AG04450 (cell line): ENCODE measurements at regions of chr3 and their contacts with region 1.

Region 1: GRCh38 chr3:146189519-146190173 is 28.7 kb upstream of the PLOD2 start:
- DNase-seq: peak; percentile 10
- H3K4me3 ChIP-seq: no peak overlapping the region
- H3K27ac ChIP-seq: no peak overlapping the region
- H3K27me3 ChIP-seq: no peaks in the 10 kb centered on the region
- CTCF ChIP-seq: peak; percentile 80

Region 2: GRCh38 chr3:146065573-146066006 is 124.1 kb before region 1 on chr3:
- CTCF ChIA-PET with region 1: interaction called, 270 read pairs
- POLR2A ChIA-PET with region 1: no interaction called
- DNase-seq: peak; percentile 48
- H3K4me3 ChIP-seq: no peak overlapping the region
- H3K27ac ChIP-seq: no peak overlapping the region
- H3K27me3 ChIP-seq: no peaks in the 10 kb centered on the region
- CTCF ChIP-seq: peak; percentile 72

Region 3: DNA sequence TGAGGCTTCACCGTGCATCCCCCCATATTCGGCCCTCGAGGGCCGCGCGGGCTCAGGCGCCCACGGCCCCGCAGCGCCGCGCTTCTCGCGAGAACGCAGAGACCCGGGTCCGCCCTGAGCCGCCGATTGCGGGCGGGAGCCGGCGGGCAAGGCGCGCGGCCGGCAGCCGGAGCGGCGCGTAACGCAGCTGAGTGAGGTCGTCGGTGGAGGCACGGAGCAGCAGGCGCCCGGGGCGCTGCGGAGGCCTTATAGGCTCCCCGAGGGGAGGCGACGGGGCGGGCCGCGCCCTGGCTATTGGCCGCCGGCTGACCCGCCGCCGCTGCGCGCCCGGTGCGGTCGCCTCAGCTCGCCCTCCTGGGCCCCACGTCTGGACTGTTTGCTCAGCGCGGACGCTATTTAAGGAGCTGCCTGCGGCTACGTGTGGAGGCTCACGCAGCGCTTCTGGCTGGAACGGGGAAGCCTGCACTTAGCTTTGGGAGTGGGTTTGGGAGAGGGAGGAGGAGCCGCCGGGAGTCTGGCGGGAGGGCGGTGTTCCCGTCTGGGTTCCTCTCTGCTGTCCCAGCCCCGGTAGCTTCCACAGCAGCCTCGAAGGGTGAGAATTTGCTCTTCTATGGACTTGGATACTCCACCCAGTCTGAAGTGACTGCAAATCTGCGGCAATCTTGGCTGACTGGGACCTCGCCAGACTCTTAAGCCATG is 28.5 kb before region 1 on chr3 and contains the start of gene PLOD2:
- CTCF ChIA-PET with region 1: interaction called, 34 read pairs
- POLR2A ChIA-PET with region 1: no interaction called
- DNase-seq: no peak
- H3K4me3 ChIP-seq: peak within 1 kb of the TSS; percentile 75
- H3K27ac ChIP-seq: peak within 1 kb of the TSS; percentile 90
- H3K27me3 ChIP-seq: no peaks in the 10 kb centered on the region
- CTCF ChIP-seq: no peak
- polyA plus RNA-seq, gene PLOD2: 63.7 and 88.9 TPM in 2 replicates

Region 4: GRCh38 chr3:146200461-146201220 is 11.0 kb after region 1 on chr3:
- CTCF ChIA-PET with region 1: interaction called, 29 read pairs
- POLR2A ChIA-PET with region 1: no interaction called
- DNase-seq: no peak
- H3K4me3 ChIP-seq: no peak overlapping the region
- H3K27ac ChIP-seq: no peak overlapping the region
- H3K27me3 ChIP-seq: no peaks in the 10 kb centered on the region
- CTCF ChIP-seq: no peak

Region 5: DNA sequence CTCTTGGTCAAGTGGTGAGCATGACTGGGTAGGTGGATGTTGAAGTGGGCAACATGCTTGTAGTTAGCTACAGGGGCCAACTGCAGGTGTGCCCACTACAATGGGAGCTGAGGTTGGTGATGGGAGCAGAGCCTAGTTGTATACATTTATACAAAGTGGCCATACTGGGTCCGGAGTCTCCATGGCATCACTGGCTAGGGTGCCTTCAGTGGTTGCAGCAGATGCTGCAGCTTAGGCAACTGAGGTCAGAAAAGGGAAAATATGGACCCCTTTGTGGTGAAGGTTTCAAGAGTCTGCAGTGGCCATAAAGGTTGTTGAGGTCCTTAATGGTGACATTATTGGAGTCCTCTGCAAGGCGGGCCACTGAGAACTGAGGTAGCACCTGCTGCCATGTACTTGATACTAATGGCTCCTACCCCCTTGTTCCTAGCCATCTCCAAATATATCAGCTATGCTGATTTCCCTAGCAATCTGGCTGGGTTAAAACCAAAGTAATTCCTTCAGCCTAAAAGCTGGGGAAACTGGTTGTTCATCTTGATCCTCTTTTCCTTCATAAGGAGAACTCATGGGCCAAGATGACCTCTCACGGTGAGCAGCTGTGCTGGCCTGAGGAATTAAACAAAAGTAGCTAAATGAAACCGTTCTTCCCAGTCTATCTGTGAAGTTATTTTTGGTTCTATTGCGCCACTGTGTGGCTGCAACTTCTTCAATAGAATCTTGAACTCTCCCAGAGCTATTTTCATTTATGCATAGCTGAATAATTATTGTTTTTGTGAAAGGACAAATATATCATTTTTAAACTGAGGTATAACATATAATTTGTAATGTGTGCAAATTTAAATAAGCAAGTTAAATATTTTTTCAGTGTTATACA is 137.3 kb after region 1 on chr3:
- CTCF ChIA-PET with region 1: interaction called, 215 read pairs
- POLR2A ChIA-PET with region 1: interaction called, 9 read pairs
- DNase-seq: peak; percentile 57
- H3K4me3 ChIP-seq: no peak overlapping the region
- H3K27ac ChIP-seq: no peak overlapping the region
- H3K27me3 ChIP-seq: no peaks in the 10 kb centered on the region
- CTCF ChIP-seq: peak; percentile 63

Region 6: GRCh38 chr3:146577662-146578061 is 388.0 kb after region 1 on chr3:
- CTCF ChIA-PET with region 1: interaction called, 75 read pairs
- POLR2A ChIA-PET with region 1: no interaction called
- DNase-seq: peak; percentile 43
- H3K4me3 ChIP-seq: no peak overlapping the region
- H3K27ac ChIP-seq: no peak overlapping the region
- H3K27me3 ChIP-seq: no peaks in the 10 kb centered on the region
- CTCF ChIP-seq: peak; percentile 47